ENCODE measurements at regions of chr1 and their contacts with region 1.

Region 1: DNA sequence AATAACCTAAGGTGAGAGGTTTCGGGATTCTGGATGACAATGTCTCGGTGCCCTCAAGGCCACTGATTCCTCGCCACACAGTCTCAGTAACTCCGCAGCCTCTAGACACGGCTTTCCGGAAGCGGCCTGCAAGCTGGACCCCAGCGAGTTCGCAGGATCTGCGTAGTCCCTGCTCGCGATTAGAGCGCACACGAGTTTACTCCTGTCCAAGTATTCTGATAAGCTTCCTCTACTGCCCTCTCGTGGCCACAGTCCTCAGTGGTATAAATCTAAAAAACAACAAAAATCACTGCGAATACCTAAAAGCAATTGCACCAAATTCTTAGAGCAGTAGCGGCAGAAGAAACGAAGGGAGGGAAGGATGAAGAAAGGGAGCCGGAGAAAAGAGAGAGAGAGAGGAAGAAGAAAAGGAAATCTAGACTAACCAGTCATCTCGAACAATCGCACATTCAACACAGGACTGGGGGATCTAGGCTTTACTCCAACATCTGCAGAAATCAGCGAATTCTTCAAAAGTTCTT is 1.1 kb upstream of the PLXNA2 start:
- DNase-seq: peak; percentile 92
- H3K4me3 ChIP-seq: peak overlapping the region in 1 of 3 experiments; percentile 40
- H3K27ac ChIP-seq: peak overlapping the region; percentile 70
- H3K4me1 ChIP-seq: peaks cover 23% of the 10 kb centered on the region
- H3K27me3 ChIP-seq: peaks cover 0 to 2% of the 10 kb centered on the region in 2 experiments
- CTCF ChIP-seq: peak; percentile 69 to 76
- POLR2A ChIP-seq: no peak

Region 2: GRCh38 chr1:207828485-207829158 is 416.6 kb before region 1 on chr1:
- CTCF ChIA-PET with region 1: no interaction called
- POLR2A ChIA-PET with region 1: no interaction called
- dilution Hi-C with region 1: no loop called
- intact Hi-C with region 1: loop called (anchors 5 kb)
- DNase-seq: peak; percentile 96
- H3K4me3 ChIP-seq: no peak overlapping the region
- H3K27ac ChIP-seq: peak overlapping the region; percentile 14
- H3K4me1 ChIP-seq: peaks cover 45% of the 10 kb centered on the region
- H3K27me3 ChIP-seq: no peaks in the 10 kb centered on the region
- CTCF ChIP-seq: peak; percentile 82 to 94
- POLR2A ChIP-seq: peak; percentile 23

Region 3: DNA sequence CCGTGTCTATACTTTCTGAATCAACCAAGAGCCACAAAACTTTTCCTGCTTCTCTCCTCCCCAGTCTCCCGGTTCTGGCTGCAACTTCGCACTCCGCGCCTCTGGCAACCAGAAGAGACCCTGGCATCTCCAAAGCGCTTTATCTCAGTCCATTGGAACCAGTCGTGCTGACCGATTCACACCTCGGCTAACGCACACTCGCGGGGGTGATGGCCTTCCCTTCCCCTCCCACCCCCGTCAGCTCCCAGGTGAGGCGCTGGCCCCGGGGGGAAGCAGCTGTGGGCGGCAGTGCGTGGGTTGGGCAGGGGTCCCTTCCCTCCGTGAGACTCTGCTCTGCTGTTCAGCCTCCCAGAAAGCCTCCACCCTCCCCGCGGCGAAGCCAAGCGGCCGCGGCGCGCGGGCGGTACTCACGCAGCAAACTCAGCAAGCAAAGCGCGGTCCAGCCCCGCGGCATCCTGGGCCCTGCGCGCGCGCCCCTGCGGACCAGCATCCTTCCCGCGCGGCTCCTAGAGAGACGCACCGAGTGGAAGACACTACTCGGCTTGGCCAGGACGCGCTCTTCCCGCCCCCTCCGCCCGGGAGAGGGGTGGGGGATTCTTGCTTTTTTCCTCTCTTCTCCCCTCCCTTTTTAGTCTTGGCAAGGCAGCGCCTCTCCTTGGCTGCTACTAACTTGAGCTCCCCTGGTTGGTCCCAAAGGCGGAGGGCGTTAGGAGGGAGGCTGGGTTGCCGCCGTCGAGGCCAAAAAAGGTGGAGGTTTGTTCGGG is 334.5 kb before region 1 on chr1 and contains the start of gene CD34:
- CTCF ChIA-PET with region 1: no interaction called
- POLR2A ChIA-PET with region 1: no interaction called
- dilution Hi-C with region 1: no loop called
- intact Hi-C with region 1: no loop called
- DNase-seq: peak; percentile 46
- H3K4me3 ChIP-seq: peak within 1 kb of the TSS; percentile 12 to 44 (median 21)
- H3K27ac ChIP-seq: no peak within 1 kb of the TSS
- H3K4me1 ChIP-seq: peaks cover 14% of the 10 kb centered on the region
- H3K27me3 ChIP-seq: peaks cover 9 to 16% of the 10 kb centered on the region in 2 experiments
- CTCF ChIP-seq: no peak
- POLR2A ChIP-seq: no peak
- total RNA-seq, gene CD34: 115 and 174 TPM in 2 replicates

Region 4: GRCh38 chr1:208029381-208030287 is 215.6 kb before region 1 on chr1:
- CTCF ChIA-PET with region 1: interaction called, 289 read pairs
- POLR2A ChIA-PET with region 1: no interaction called
- dilution Hi-C with region 1: no loop called
- intact Hi-C with region 1: loop called (anchors 5 kb)
- DNase-seq: peak; percentile 86
- H3K4me3 ChIP-seq: no peak overlapping the region
- H3K27ac ChIP-seq: peak overlapping the region; percentile 85
- H3K4me1 ChIP-seq: peaks cover 43% of the 10 kb centered on the region
- H3K27me3 ChIP-seq: no peaks in the 10 kb centered on the region
- CTCF ChIP-seq: no peak
- POLR2A ChIP-seq: no peak

Region 5: GRCh38 chr1:208093754-208094719 is 151.2 kb before region 1 on chr1:
- CTCF ChIA-PET with region 1: interaction called, 15 read pairs
- POLR2A ChIA-PET with region 1: no interaction called
- dilution Hi-C with region 1: no loop called
- intact Hi-C with region 1: no loop called
- DNase-seq: peak; percentile 57
- H3K4me3 ChIP-seq: no peak overlapping the region
- H3K27ac ChIP-seq: peak overlapping the region; percentile 63
- H3K4me1 ChIP-seq: no peaks in the 10 kb centered on the region
- H3K27me3 ChIP-seq: no peaks in the 10 kb centered on the region
- CTCF ChIP-seq: peak; percentile 80 to 82
- POLR2A ChIP-seq: no peak

Region 6: GRCh38 chr1:208132287-208132883 is 112.9 kb before region 1 on chr1:
- CTCF ChIA-PET with region 1: interaction called, 316 read pairs
- POLR2A ChIA-PET with region 1: no interaction called
- dilution Hi-C with region 1: loop called (anchors 25 kb)
- intact Hi-C with region 1: loop called (anchors 1 kb)
- DNase-seq: peak; percentile 64
- H3K4me3 ChIP-seq: no peak overlapping the region
- H3K27ac ChIP-seq: no peak overlapping the region
- H3K4me1 ChIP-seq: peaks cover 4% of the 10 kb centered on the region
- H3K27me3 ChIP-seq: no peaks in the 10 kb centered on the region
- CTCF ChIP-seq: peak; percentile 88 to 91
- POLR2A ChIP-seq: no peak

Region 7: DNA sequence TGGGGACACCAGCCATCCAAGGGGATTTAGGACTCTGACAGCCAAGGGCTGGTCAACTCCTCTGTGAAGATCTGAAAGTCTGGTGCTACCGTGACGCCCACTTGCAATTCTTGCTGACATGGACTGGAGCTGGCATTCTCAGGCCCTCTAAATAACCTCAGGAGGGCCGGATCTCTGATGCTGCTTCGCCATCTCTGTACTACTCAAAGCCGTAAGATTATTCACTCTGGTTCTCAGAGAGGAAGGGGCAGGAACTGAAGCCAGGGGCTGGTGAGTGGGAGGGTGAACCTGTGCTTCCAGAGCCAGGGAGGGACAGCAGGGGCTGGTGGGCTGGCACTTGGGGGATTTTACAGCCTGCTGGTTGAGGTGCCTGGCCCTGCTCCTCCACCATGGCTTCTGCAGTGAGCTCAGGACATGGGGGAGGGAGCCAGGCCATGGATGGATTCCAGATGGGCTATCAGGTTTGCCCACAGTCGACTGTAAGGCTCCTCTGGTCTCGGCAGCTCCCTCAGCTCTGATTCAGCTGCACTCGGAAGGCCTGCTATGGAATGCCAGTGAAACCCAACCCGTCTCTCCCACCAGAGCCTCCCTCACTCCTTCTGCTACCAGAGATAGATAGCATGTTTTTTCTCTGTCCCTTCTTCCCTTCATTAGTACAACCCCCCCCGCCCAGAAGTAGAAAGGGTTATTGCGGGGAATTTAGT is 85.5 kb before region 1 on chr1:
- CTCF ChIA-PET with region 1: interaction called, 52 read pairs
- POLR2A ChIA-PET with region 1: no interaction called
- dilution Hi-C with region 1: no loop called
- intact Hi-C with region 1: loop called (anchors 1 kb)
- DNase-seq: peak; percentile 41
- H3K4me3 ChIP-seq: no peak overlapping the region
- H3K27ac ChIP-seq: peak overlapping the region; percentile 27
- H3K4me1 ChIP-seq: peaks cover 54% of the 10 kb centered on the region
- H3K27me3 ChIP-seq: no peaks in the 10 kb centered on the region
- CTCF ChIP-seq: no peak
- POLR2A ChIP-seq: no peak

Region 8: DNA sequence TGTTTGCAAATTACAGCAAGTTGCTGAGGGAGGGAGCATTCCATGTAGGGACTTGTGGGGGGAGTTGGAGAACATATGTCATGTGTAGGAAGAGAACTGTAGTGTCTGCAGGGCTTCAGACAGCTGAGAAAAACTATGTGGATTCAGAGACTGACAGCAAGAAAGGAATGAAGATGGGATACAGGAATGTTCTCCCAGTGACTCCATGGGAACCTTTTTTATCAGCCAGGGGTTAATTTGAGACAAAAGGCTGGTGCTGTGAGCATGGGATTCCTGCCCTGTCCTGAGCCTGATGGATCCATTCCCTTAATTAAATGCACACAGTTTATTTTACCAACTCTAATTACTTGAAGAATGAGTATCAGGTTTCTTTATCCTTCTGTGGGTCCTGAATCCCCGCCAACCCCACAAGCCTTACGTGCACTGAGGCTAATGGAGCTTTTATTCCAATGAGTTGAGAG is 25.4 kb after region 1 on chr1:
- CTCF ChIA-PET with region 1: no interaction called
- POLR2A ChIA-PET with region 1: no interaction called
- dilution Hi-C with region 1: no loop called
- intact Hi-C with region 1: no loop called
- DNase-seq: no peak
- H3K4me3 ChIP-seq: no peak overlapping the region
- H3K27ac ChIP-seq: no peak overlapping the region
- H3K4me1 ChIP-seq: no peaks in the 10 kb centered on the region
- H3K27me3 ChIP-seq: peaks cover 23 to 67% of the 10 kb centered on the region in 2 experiments
- CTCF ChIP-seq: no peak
- POLR2A ChIP-seq: no peak

Region 9: DNA sequence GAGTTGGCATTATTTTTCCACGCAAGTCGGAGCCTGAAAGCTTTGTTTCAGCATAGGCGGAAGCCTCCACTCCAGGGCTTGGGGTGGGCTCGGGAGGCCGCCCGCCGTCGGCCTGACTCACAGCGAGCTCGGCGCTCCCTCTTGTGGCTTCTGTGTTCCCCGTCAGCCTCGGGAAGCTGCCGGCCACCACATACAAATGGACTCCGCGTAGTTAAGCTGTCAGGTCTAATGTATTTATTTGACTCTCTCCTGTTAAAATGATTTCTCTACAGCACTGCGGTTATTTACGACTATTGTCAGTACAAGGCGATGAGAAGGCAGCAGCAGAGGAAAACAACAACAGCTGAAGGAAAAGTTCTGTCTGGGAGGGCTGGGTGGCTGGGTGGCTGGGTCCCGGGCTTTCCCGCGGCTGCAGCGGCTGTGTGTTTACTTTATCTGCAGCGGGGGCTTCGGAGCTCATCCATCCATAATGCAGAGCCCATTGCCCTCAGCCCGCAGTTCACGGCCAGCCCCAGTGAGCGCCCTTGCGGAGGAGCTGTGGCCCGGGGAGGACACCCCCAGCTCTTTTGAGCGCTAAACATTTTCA is 962.5 kb after region 1 on chr1:
- CTCF ChIA-PET with region 1: interaction called, 14 read pairs
- POLR2A ChIA-PET with region 1: no interaction called
- dilution Hi-C with region 1: no loop called
- intact Hi-C with region 1: loop called (anchors 10 kb)
- DNase-seq: peak; percentile 73
- H3K4me3 ChIP-seq: no peak overlapping the region
- H3K27ac ChIP-seq: no peak overlapping the region
- H3K4me1 ChIP-seq: no peaks in the 10 kb centered on the region
- H3K27me3 ChIP-seq: peaks cover 16 to 23% of the 10 kb centered on the region in 2 experiments
- CTCF ChIP-seq: peak; percentile 77 to 87
- POLR2A ChIP-seq: no peak

Measured in endothelial cell of umbilical vein (primary cell).